ENCODE measurements at regions of chr10 and their contacts with region 1.

Region 1: DNA sequence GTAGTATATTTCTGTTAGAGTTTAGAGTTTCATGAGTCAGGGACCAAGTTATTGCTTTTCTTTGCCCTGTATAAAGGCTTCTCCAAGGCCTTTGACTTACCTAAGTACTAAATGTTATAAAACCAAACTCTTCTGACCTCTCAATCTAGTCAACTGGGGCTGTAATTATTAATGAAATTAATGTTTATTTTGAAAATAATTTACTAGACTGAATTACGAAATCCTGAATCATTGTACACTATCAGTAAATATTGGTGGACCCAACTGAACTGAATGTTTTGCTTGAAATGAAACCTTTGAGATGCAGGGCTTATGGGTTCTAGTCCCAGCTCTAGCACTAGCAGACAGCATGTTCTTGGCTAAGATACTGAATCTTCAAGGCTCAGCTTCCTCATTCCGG is 1.7 kb upstream of the CYP2C9 start:
- DNase-seq: no peak
- ATAC-seq: no peak
- H3K4me3 ChIP-seq: no peak overlapping the region
- H3K27ac ChIP-seq: no peak overlapping the region
- H3K4me1 ChIP-seq: no peaks in the 10 kb centered on the region
- H3K27me3 ChIP-seq: no peaks in the 10 kb centered on the region
- CTCF ChIP-seq: no peak
- EP300 ChIP-seq: no peak
- POLR2A ChIP-seq: no peak
- RAD21 ChIP-seq: no peak

Region 2: GRCh38 chr10:94889123-94889522 is 47.6 kb before region 1 on chr10:
- CTCF ChIA-PET with region 1: no interaction called
- POLR2A ChIA-PET with region 1: no interaction called
- RAD21 ChIA-PET with region 1: no interaction called
- SMC1A ChIA-PET with region 1: no interaction called
- in situ Hi-C with region 1: no loop called
- intact Hi-C with region 1: loop called (anchors 10 kb)
- DNase-seq: no peak
- ATAC-seq: no peak
- H3K4me3 ChIP-seq: no peak overlapping the region
- H3K27ac ChIP-seq: no peak overlapping the region
- H3K4me1 ChIP-seq: no peaks in the 10 kb centered on the region
- H3K27me3 ChIP-seq: no peaks in the 10 kb centered on the region
- CTCF ChIP-seq: no peak
- EP300 ChIP-seq: no peak
- POLR2A ChIP-seq: no peak
- RAD21 ChIP-seq: no peak

Measured in GM12878 (cell line).